AG04450 (cell line): ENCODE measurements at regions of chr14 and their contacts with region 1.

Region 1: GRCh38 chr14:77862154-77862786 is 62.4 kb downstream of the ADCK1 start:
- DNase-seq: peak; percentile 6
- H3K4me3 ChIP-seq: no peak overlapping the region
- H3K27ac ChIP-seq: no peak overlapping the region
- H3K27me3 ChIP-seq: no peaks in the 10 kb centered on the region
- CTCF ChIP-seq: peak; percentile 96

Region 2: DNA sequence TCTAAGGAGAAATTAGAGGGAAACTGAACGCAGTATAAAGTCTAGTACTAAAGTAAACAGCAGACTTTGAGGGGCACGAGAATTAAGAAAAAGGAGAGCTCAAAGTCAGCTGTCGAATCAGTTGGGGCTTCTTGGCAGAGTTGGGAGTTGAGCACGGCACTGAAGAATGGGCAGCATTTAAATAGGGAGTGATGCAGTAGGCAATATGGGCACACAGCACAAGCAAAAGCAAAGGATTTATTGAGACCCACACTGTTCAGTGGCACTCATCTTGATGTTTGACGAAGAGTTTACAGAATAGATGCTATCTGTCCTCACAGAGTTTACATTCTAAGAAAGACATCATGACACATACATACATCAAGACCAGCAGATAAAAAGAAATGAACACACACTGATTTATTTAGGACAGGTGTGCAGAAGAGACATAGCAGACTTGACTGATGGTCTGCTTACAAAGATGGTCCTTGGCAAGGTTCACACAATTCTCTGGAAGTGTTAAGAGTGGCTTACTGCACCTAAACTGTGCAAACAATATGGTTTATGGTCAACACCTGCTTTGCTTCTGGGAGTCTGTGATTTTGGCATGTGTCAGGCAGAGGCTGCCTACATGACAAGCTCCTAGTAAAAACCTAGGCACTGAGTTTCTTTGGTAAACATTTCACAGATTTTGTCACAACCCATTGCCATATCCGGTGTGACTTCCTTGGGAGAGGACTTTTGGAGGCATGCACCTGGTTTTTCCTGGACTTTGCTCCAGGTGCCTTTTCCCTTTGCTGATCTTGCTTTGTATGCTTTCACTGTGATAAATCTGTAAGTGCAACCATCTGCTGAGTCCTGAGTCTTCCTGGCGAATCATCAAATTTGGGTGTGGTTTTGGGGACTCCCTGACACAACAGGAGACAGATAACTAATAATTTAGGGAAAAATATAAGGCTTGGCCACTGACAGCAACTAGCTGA is 180.8 kb before region 1 on chr14:
- CTCF ChIA-PET with region 1: no interaction called
- POLR2A ChIA-PET with region 1: no interaction called
- DNase-seq: no peak
- H3K4me3 ChIP-seq: no peak overlapping the region
- H3K27ac ChIP-seq: no peak overlapping the region
- H3K27me3 ChIP-seq: no peaks in the 10 kb centered on the region
- CTCF ChIP-seq: no peak

Region 3: GRCh38 chr14:77812028-77812427 is 50.2 kb before region 1 on chr14:
- CTCF ChIA-PET with region 1: interaction called, 13 read pairs
- POLR2A ChIA-PET with region 1: no interaction called
- DNase-seq: no peak
- H3K4me3 ChIP-seq: no peak overlapping the region
- H3K27ac ChIP-seq: no peak overlapping the region
- H3K27me3 ChIP-seq: no peaks in the 10 kb centered on the region
- CTCF ChIP-seq: no peak

Region 4: DNA sequence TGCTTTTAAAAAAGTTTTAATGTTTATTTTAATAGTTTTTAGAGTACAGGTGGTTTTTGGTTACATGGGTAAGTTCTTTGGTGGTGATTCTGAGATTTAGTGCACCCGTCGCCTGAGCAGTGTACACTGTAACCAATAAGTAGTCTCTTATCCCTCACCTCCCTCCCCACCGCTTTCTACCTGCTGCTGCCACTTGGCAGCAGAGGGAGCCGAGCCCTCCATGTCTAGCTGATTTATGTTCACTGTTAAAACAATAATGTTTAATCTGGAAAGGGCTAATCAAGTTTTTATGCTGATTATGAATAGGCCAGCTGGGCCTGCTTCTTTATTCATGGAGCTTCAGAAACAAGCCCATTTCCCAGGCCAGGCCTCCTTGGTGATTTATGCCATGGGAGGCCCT is 10.7 kb after region 1 on chr14:
- CTCF ChIA-PET with region 1: interaction called, 16 read pairs
- POLR2A ChIA-PET with region 1: no interaction called
- DNase-seq: no peak
- H3K4me3 ChIP-seq: no peak overlapping the region
- H3K27ac ChIP-seq: no peak overlapping the region
- H3K27me3 ChIP-seq: no peaks in the 10 kb centered on the region
- CTCF ChIP-seq: no peak

Region 5: DNA sequence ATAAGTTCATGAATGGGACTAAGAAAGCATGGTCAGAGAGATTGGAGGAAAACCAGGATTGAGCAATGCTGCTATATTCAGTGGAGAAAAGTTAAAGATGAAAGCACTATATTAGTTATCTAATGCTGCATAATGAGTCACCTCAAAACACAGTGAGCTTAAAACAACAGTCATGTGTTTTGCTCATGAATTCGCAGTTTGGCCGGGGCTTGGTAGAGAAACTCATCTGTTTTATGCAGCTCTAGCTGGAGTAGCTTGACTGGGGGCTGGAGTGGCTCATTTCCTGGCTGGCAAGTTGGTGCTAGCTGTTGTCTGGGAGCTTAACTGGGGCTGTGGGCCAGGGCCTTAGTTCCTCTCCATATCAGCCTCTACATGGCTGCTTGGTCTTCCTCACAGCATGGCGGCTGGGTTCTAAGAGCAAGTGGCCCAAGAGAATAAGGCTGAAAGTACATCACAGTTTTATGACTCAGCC is 27.7 kb after region 1 on chr14:
- CTCF ChIA-PET with region 1: interaction called, 17 read pairs
- POLR2A ChIA-PET with region 1: no interaction called
- DNase-seq: peak; percentile 37
- H3K4me3 ChIP-seq: no peak overlapping the region
- H3K27ac ChIP-seq: peak overlapping the region; percentile 66
- H3K27me3 ChIP-seq: no peaks in the 10 kb centered on the region
- CTCF ChIP-seq: no peak

Region 6: DNA sequence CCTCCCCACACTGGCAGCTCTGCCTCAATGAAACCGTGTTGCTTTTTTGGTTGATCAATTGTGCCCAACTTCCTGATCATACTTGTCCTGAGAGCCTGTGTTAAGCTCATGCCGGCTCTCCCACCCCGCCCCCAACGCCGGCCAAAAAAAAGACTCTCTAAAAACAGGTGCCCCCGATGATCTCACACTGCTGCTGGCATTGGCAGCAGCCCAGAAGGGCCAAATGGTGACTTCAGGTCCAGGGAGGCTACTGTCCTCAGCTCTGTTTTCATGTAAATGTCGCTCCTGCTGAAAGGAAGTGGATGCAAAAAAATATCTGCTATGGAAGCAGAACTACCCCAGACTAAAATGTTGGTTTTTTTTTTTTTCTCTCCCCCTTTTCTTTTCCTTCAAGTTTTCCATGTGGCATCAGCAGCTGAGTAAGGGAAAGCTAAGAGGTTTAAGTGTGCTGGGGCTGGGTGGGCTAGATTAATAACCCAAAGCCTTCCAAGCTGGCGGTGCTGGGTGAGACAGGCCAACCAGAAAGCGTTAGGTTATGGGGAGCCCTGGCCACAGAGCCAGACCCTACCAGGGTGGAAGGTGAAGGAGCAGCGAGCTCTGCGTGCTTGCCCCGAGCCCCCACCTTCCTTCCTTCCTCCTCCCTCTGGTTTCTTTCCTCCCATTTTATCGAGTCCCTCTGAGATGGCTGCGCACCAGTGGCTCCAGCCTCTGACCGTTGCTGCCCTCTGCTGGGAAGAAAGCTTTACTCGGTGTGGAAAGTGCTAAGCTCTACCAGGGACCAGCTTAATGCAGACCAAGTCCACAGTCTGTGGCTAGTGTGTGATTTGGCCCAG is 704.0 kb after region 1 on chr14:
- CTCF ChIA-PET with region 1: interaction called, 35 read pairs
- POLR2A ChIA-PET with region 1: no interaction called
- DNase-seq: peak; percentile 3
- H3K4me3 ChIP-seq: peak overlapping the region; percentile 22; the same call in 1 of the 2 replicates
- H3K27ac ChIP-seq: no peak overlapping the region
- H3K27me3 ChIP-seq: no peaks in the 10 kb centered on the region
- CTCF ChIP-seq: peak; percentile 64

Region 7: DNA sequence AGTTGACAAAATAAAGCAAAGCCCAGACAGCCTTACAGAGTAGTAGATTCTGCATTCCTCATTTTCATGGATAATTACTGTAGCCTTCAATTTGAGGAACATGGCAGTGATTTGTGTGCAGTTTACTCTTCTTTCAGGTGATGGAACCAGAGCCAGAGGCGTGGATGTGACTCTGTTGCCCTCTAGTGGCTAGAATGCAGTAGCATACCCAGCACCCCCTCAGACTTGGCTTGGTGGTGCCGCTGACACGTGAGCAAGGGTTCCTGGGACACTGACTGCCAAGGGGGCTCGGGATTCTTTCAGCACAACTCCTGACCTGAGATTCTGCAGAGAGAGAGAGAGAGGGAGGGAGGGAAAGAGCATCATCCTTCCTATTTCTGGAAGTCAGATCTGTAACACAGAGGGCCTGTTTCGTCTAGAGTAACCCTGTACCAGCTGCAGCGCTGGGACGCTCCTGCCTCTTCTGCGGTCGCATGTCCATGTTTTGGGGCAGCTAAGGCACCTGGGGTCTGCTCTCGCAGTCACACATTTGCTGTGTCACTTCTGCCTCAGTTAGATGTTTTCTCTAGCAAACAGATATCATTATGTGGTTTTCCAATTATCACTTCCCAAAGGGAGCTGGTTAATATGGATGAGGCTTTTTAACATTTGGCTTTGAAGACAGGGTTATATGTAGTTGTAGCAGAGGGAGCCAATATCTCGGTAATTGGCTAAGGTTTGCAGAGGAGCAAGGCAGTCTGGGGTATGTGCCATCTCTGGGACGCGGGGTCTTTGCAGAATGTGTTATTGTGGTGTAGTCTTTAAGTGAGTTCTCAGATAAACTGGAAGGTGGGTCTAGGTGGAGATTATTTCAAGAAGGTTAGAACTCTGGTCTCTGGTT is 736.0 kb after region 1 on chr14:
- CTCF ChIA-PET with region 1: interaction called, 13 read pairs
- POLR2A ChIA-PET with region 1: no interaction called
- DNase-seq: no peak
- H3K4me3 ChIP-seq: no peak overlapping the region
- H3K27ac ChIP-seq: no peak overlapping the region
- H3K27me3 ChIP-seq: no peaks in the 10 kb centered on the region
- CTCF ChIP-seq: peak; percentile 82

Region 8: DNA sequence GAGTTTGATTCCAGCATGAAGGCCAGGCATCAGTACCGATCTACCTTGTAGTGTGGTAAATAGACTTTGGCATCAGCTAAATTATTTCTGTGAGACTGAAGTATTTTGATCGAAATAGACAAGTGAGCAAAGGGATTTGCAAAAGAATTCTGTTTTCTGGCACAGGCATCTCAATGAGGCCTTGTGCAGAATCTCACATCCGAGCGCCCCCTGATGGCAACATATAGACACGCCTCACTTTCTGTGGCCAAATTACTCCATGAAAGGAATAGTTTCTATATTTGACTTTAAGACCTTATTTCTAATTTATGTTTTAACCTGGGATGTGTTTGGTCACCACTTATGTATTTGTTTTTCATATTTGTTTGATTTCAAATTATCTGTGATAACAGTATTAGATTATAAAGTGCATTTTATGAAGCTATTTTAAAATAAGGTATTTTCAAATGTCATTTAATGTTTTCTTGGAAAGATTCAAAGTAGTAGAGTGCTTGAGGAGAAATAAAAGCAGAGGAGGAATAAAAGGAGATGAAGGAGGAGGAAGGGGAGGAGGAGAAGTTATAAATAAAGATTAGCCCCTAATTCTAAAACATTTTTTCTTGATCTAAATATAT is 1039.8 kb after region 1 on chr14:
- CTCF ChIA-PET with region 1: interaction called, 14 read pairs
- POLR2A ChIA-PET with region 1: no interaction called
- DNase-seq: peak; percentile 20
- H3K4me3 ChIP-seq: no peak overlapping the region
- H3K27ac ChIP-seq: no peak overlapping the region
- H3K27me3 ChIP-seq: no peaks in the 10 kb centered on the region
- CTCF ChIP-seq: peak; percentile 79